B cell (primary cell): ENCODE measurements at regions of chr14 and their contacts with region 1.

Region 1: GRCh38 chr14:50321009-50321660 is 9.0 kb downstream of the DMAC2L start:
- DNase-seq: peak; percentile 81
- ATAC-seq: peak; percentile 94
- H3K4me3 ChIP-seq: no peak overlapping the region
- H3K4me3 Mint-ChIP-seq: no peak overlapping the region
- H3K27ac ChIP-seq: peak overlapping the region in 1 of 2 donors; percentile 64
- H3K27ac Mint-ChIP-seq: no peak overlapping the region
- H3K4me1 ChIP-seq: peaks cover 10% of the 10 kb centered on the region in 2 donors
- H3K4me1 Mint-ChIP-seq: peaks cover 17% of the 10 kb centered on the region
- H3K27me3 ChIP-seq: no peaks in the 10 kb centered on the region
- H3K27me3 Mint-ChIP-seq: no peaks in the 10 kb centered on the region
- CTCF ChIP-seq: peak; percentile 89

Region 2: GRCh38 chr14:50171895-50172294 is 149.2 kb before region 1 on chr14:
- CTCF ChIA-PET with region 1: no interaction called
- POLR2A ChIA-PET with region 1: no interaction called
- intact Hi-C with region 1: no loop called
- DNase-seq: no peak
- ATAC-seq: no peak
- H3K4me3 ChIP-seq: no peak overlapping the region
- H3K4me3 Mint-ChIP-seq: no peak overlapping the region
- H3K27ac ChIP-seq: no peak overlapping the region
- H3K27ac Mint-ChIP-seq: no peak overlapping the region
- H3K4me1 ChIP-seq: no peaks in the 10 kb centered on the region
- H3K4me1 Mint-ChIP-seq: no peaks in the 10 kb centered on the region
- H3K27me3 ChIP-seq: no peaks in the 10 kb centered on the region
- H3K27me3 Mint-ChIP-seq: no peaks in the 10 kb centered on the region
- CTCF ChIP-seq: no peak

Region 3: GRCh38 chr14:50335389-50335788 is 14.3 kb after region 1 on chr14:
- CTCF ChIA-PET with region 1: interaction called, 18 read pairs
- POLR2A ChIA-PET with region 1: no interaction called
- intact Hi-C with region 1: no loop called
- DNase-seq: no peak
- ATAC-seq: no peak
- H3K4me3 ChIP-seq: no peak overlapping the region
- H3K4me3 Mint-ChIP-seq: peak overlapping the region; percentile 77
- H3K27ac ChIP-seq: peak overlapping the region in 1 of 2 donors; percentile 74
- H3K27ac Mint-ChIP-seq: peak overlapping the region; percentile 81
- H3K4me1 ChIP-seq: peaks cover 11 to 12% of the 10 kb centered on the region in 2 donors
- H3K4me1 Mint-ChIP-seq: peaks cover 16% of the 10 kb centered on the region
- H3K27me3 ChIP-seq: no peaks in the 10 kb centered on the region
- H3K27me3 Mint-ChIP-seq: no peaks in the 10 kb centered on the region
- CTCF ChIP-seq: no peak

Region 4: DNA sequence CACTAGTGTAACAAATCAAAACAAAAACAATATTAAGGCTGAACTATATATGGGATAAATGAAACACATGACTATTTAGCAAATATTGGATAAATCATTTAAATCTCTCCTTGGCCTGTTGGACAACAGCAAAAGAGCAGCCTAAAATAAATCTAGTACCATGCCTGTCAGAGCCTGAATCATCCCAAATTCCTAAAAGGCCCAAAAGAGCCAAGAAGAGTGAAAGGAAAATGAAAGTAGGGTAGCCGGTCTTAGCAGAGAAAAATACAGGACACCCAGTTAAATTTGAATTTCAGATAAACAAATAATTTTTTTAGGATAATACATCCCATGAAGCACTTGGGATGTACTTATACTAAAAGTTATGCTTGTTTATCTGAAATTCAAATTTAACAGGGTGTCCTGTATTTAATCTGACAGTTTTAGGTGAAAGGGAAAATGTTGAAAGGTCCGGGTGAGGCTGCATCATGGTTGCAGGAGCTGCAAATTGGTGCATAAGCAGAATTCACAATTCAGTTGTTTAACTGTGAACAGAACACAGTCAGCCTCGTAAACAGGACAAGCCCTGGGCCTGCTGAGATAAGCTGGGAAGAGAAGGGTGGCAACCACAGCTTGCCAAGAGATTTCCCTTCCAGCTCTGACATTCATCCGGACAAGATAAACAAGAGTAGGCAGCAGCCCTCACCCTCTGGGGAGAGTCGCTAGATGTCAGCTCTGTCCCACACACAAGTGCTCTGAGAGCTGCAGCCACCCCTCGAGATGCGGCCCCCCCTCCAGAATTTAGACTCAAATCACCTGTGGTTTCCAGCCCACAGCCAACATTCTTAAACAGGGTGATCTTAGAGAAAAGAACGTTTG is 21.3 kb after region 1 on chr14:
- CTCF ChIA-PET with region 1: interaction called, 8 read pairs
- POLR2A ChIA-PET with region 1: interaction called, 10 read pairs
- intact Hi-C with region 1: no loop called
- DNase-seq: peak; percentile 70
- ATAC-seq: peak; percentile 67
- H3K4me3 ChIP-seq: no peak overlapping the region
- H3K4me3 Mint-ChIP-seq: no peak overlapping the region
- H3K27ac ChIP-seq: no peak overlapping the region
- H3K27ac Mint-ChIP-seq: no peak overlapping the region
- H3K4me1 ChIP-seq: peaks cover 5 to 8% of the 10 kb centered on the region in 2 donors
- H3K4me1 Mint-ChIP-seq: peaks cover 13% of the 10 kb centered on the region
- H3K27me3 ChIP-seq: no peaks in the 10 kb centered on the region
- H3K27me3 Mint-ChIP-seq: no peaks in the 10 kb centered on the region
- CTCF ChIP-seq: peak; percentile 44

Region 5: GRCh38 chr14:50363714-50364111 is 42.6 kb after region 1 on chr14:
- CTCF ChIA-PET with region 1: interaction called, 6 read pairs
- POLR2A ChIA-PET with region 1: no interaction called
- intact Hi-C with region 1: loop called (anchors 2 kb)
- DNase-seq: peak; percentile 87
- ATAC-seq: peak; percentile 98
- H3K4me3 ChIP-seq: peak overlapping the region; percentile 44 to 82 (median 58)
- H3K4me3 Mint-ChIP-seq: peak overlapping the region; percentile 84
- H3K27ac ChIP-seq: peak overlapping the region; percentile 87 to 90
- H3K27ac Mint-ChIP-seq: peak overlapping the region; percentile 88
- H3K4me1 ChIP-seq: peaks cover 21 to 33% of the 10 kb centered on the region in 2 donors
- H3K4me1 Mint-ChIP-seq: peaks cover 46% of the 10 kb centered on the region
- H3K27me3 ChIP-seq: no peaks in the 10 kb centered on the region
- H3K27me3 Mint-ChIP-seq: no peaks in the 10 kb centered on the region
- CTCF ChIP-seq: no peak

Region 6: GRCh38 chr14:50396631-50397390 is 75.7 kb after region 1 on chr14 and contains the start of gene CDKL1:
- CTCF ChIA-PET with region 1: interaction called, 10 read pairs
- POLR2A ChIA-PET with region 1: no interaction called
- intact Hi-C with region 1: loop called (anchors 1 kb)
- DNase-seq: peak; percentile 50
- ATAC-seq: peak; percentile 65
- H3K4me3 ChIP-seq: peak within 1 kb of the TSS; percentile 51 to 78 (median 69)
- H3K4me3 Mint-ChIP-seq: peak within 1 kb of the TSS; percentile 93
- H3K27ac ChIP-seq: peak within 1 kb of the TSS in 1 of 2 donors; percentile 3
- H3K27ac Mint-ChIP-seq: peak within 1 kb of the TSS; percentile 54
- H3K4me1 ChIP-seq: peaks cover 11 to 24% of the 10 kb centered on the region in 2 donors
- H3K4me1 Mint-ChIP-seq: peaks cover 41% of the 10 kb centered on the region
- H3K27me3 ChIP-seq: no peaks in the 10 kb centered on the region
- H3K27me3 Mint-ChIP-seq: peaks cover 2% of the 10 kb centered on the region
- CTCF ChIP-seq: no peak
- total RNA-seq, gene CDKL1: 7.9 and 8.9 TPM in 2 replicates

Region 7: DNA sequence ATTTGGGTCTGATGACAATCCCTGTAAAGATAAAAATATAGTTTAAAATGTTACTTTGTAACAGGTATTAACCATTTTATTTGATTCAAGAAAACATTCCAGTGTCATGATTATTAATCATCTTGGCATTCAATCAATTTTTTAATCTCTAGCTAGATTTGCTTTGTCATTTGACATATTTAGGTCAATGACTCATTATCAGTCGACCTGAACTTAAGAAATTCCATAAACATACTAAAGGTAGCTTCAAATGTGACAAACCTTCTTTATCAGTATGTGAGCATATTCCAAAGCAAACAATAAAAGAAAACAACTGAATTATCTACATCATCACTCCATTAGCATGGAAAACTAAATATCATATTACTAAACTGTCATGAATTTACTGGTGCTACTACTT is 126.3 kb after region 1 on chr14:
- CTCF ChIA-PET with region 1: interaction called, 3 read pairs
- POLR2A ChIA-PET with region 1: no interaction called
- intact Hi-C with region 1: loop called (anchors 5 kb)
- DNase-seq: no peak
- ATAC-seq: no peak
- H3K4me3 ChIP-seq: no peak overlapping the region
- H3K4me3 Mint-ChIP-seq: no peak overlapping the region
- H3K27ac ChIP-seq: no peak overlapping the region
- H3K27ac Mint-ChIP-seq: no peak overlapping the region
- H3K4me1 ChIP-seq: no peaks in the 10 kb centered on the region
- H3K4me1 Mint-ChIP-seq: no peaks in the 10 kb centered on the region
- H3K27me3 ChIP-seq: no peaks in the 10 kb centered on the region
- H3K27me3 Mint-ChIP-seq: no peaks in the 10 kb centered on the region
- CTCF ChIP-seq: no peak

Region 8: DNA sequence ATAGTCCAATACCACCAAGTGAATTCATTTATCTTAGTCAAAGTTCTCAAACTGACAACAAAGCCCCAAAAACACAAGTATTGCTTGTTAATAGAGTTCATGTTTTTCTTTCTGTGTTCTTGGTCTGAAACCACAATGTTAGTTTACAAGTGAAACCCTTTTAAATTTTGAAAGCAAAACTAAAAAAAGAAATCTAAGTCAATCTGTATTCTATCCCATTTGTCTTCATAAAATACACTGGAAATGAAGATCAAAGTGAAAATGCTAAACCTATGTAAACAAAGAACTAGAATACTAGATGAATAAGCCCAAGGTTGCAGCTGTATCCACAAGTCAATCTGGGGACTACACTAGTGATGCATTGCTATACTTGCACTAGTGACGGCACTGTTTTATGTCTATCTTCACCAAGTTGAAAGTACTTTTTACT is 200.8 kb after region 1 on chr14:
- CTCF ChIA-PET with region 1: interaction called, 10 read pairs
- POLR2A ChIA-PET with region 1: no interaction called
- intact Hi-C with region 1: no loop called
- DNase-seq: no peak
- ATAC-seq: no peak
- H3K4me3 ChIP-seq: no peak overlapping the region
- H3K4me3 Mint-ChIP-seq: peak overlapping the region; percentile 62
- H3K27ac ChIP-seq: no peak overlapping the region
- H3K27ac Mint-ChIP-seq: peak overlapping the region; percentile 69
- H3K4me1 ChIP-seq: peaks cover 24 to 33% of the 10 kb centered on the region in 2 donors
- H3K4me1 Mint-ChIP-seq: peaks cover 55% of the 10 kb centered on the region
- H3K27me3 ChIP-seq: no peaks in the 10 kb centered on the region
- H3K27me3 Mint-ChIP-seq: no peaks in the 10 kb centered on the region
- CTCF ChIP-seq: no peak

Region 9: DNA sequence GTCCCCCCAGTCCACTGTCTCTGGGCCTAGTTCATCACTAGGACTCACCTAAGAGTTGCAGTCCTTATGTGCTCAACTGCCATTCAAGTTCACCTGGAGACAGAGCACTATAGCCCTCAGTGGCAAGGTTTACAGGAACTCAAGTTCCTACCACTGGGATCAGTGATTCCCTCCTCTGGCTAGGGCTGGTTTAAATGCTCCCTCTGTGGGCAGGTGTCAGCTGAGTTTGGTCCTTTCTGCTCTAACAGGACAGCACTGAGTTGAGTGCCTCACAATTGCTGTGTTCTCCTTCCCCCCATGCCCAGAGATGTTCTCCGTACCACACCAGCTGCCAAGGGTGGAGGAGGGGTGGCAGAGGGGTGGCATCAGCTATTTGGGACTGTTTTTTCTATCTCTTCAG is 367.7 kb after region 1 on chr14:
- CTCF ChIA-PET with region 1: no interaction called
- POLR2A ChIA-PET with region 1: no interaction called
- intact Hi-C with region 1: no loop called
- DNase-seq: no peak
- ATAC-seq: no peak
- H3K4me3 ChIP-seq: no peak overlapping the region
- H3K4me3 Mint-ChIP-seq: no peak overlapping the region
- H3K27ac ChIP-seq: no peak overlapping the region
- H3K27ac Mint-ChIP-seq: no peak overlapping the region
- H3K4me1 ChIP-seq: no peaks in the 10 kb centered on the region
- H3K4me1 Mint-ChIP-seq: no peaks in the 10 kb centered on the region
- H3K27me3 ChIP-seq: no peaks in the 10 kb centered on the region
- H3K27me3 Mint-ChIP-seq: no peaks in the 10 kb centered on the region
- CTCF ChIP-seq: no peak